Esophagus muscularis mucosa (tissue), 4 donors: ENCODE measurements at regions of chr12 and their contacts with region 1.

Region 1: DNA sequence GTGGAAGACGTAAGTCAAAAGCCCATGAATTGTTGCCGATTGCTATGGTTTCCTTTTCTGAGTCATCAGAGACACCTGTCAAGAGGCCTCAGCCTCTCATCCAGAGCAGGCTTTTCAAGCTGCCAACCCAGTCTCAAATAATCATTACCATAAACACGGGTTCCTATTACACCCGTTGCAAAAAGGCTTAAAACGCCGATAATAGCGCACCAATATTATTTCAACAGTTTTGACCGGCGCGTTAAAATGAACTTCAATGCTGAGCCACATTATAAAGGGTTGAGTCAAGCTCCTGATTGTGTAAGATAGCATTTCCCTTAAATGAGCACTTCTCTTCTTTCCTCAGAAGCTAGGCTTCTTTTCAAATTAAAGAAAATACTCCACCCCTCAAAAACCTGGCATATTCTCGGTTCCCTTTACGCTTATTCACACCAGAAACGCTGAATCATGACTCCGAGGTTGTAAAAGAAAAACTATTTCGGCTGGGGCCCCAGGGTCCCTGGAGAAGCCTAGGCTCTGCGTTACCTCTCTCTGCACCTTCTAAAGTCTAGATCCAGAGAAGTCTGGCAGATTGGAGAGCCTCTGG is 1.4 kb downstream of the TMTC1 start:
- DNase-seq: no peak
- H3K4me3 ChIP-seq: peak overlapping the region; percentile 73 to 90 (median 88)
- H3K27ac ChIP-seq: peak overlapping the region; percentile 84 to 94 (median 87)
- H3K4me1 ChIP-seq: peaks cover 13 to 37% (median 37%) of the 10 kb centered on the region in 4 donors
- H3K27me3 ChIP-seq: no peaks in the 10 kb centered on the region
- CTCF ChIP-seq: no peak
- EP300 ChIP-seq: no peak
- POLR2A ChIP-seq: no peak

Region 2: DNA sequence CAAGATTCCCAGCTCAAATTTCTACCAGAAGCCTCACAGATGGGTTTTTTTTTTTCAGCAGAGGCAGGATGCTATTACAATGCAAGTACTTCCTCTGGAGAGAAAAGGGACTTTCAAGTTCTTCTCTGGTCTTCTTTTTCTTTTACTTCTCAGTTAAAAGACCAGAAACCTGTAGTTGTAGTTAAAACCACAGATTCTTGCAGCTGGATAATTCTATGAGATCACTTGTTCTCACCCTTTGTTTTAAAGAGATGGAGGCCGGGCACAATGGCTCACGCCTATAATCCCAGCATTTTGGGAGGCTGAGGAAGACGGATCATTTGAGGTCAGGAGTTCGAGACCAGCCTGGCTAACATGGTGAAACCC is 237.3 kb before region 1 on chr12:
- intact Hi-C with region 1: loop called (anchors 5 kb)
- DNase-seq: no peak
- H3K4me3 ChIP-seq: no peak overlapping the region
- H3K27ac ChIP-seq: no peak overlapping the region
- H3K4me1 ChIP-seq: peaks cover 13 to 29% (median 21%) of the 10 kb centered on the region in 4 donors
- H3K27me3 ChIP-seq: no peaks in the 10 kb centered on the region
- CTCF ChIP-seq: no peak
- EP300 ChIP-seq: no peak
- POLR2A ChIP-seq: no peak

Region 3: DNA sequence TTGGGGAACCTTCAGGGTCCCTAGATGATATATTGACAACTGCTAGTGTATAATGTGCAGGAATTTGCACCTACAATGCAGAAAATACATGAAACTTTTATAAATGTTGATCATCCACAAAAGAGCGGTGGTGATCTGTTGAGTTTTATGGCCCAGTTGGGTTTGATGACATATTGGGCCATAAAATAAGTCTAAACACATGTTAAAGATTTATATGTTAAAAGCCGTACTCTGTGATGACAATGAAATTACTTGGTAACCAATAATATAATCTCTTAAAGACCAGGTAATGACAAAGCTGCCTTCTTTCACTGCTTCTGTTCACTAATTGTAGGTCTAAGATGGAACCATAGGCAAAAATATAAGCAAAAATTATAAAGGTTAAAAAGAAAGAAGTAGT is 60.2 kb before region 1 on chr12:
- intact Hi-C with region 1: loop called (anchors 5 kb)
- DNase-seq: no peak
- H3K4me3 ChIP-seq: no peak overlapping the region
- H3K27ac ChIP-seq: no peak overlapping the region
- H3K4me1 ChIP-seq: peaks cover 21 to 24% (median 23%) of the 10 kb centered on the region in 4 donors
- H3K27me3 ChIP-seq: no peaks in the 10 kb centered on the region
- CTCF ChIP-seq: no peak
- EP300 ChIP-seq: no peak
- POLR2A ChIP-seq: no peak